PC-9 (cell line): ENCODE measurements at regions of chr6 and their contacts with region 1.

Region 1: GRCh38 chr6:158417760-158418098 is 105.5 kb downstream of the TULP4 start:
- DNase-seq: no peak
- H3K4me3 ChIP-seq: no peak overlapping the region
- H3K27ac ChIP-seq: no peak overlapping the region
- H3K4me1 ChIP-seq: peaks cover 8% of the 10 kb centered on the region
- H3K27me3 ChIP-seq: no peaks in the 10 kb centered on the region
- CTCF ChIP-seq: no peak

Region 2: DNA sequence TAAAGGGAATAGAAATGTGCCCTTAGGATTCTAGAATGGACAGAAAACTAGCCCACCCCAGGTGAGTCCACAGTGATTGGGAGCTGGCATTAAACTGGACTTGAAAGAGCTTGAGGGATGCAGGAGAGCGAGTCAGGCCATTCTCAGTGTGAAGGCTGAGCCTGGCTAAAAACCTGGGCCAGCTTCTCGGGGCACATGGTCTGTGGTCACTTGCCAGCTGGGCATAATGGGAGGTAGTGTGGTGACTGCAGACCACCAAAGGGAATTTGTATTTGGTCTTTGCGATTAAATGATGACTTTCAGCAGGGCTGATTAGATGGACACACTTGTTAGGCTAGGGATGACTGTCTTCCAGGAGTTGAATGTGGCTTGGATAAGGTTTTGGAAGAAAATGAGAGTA is 34.2 kb before region 1 on chr6:
- CTCF ChIA-PET with region 1: interaction called, 10 read pairs
- POLR2A ChIA-PET with region 1: no interaction called
- intact Hi-C with region 1: no loop called
- DNase-seq: no peak
- H3K4me3 ChIP-seq: no peak overlapping the region
- H3K27ac ChIP-seq: no peak overlapping the region
- H3K4me1 ChIP-seq: no peaks in the 10 kb centered on the region
- H3K27me3 ChIP-seq: no peaks in the 10 kb centered on the region
- CTCF ChIP-seq: no peak